Breast epithelium (tissue), 4 donors: ENCODE measurements at regions of chr6 and their contacts with region 1.

Region 1: DNA sequence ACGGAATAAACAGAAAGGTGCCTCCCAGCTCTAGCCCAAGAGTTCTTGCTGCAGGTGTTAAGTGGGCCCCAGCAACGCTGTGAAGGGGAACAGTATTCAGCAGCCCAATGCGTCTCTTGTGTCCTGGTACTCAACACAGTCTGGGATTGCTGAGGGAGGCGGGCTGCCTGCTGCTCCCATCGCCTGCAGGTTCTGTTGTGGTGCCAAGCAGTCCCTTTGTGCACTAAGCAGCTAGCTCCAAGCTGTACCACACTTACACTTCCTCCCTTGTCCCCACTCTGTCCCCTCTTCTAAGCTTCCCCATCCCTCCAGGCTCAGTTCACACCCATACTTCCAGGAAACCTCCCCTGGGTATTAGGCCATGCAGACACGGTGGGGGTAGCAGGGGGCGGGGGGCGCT is 92.7 kb downstream of the AGPAT4 start:
- DNase-seq: no peak
- H3K4me3 ChIP-seq: no peak overlapping the region
- H3K27ac ChIP-seq: no peak overlapping the region
- H3K4me1 ChIP-seq: no peaks in the 10 kb centered on the region
- H3K27me3 ChIP-seq: no peaks in the 10 kb centered on the region
- CTCF ChIP-seq: no peak
- POLR2A ChIP-seq: no peak

Region 2: GRCh38 chr6:162082520-162082919 is 901.4 kb after region 1 on chr6:
- intact Hi-C with region 1: loop called (anchors 5 kb)
- DNase-seq: no peak
- H3K4me3 ChIP-seq: no peak overlapping the region
- H3K27ac ChIP-seq: no peak overlapping the region
- H3K4me1 ChIP-seq: no peaks in the 10 kb centered on the region
- H3K27me3 ChIP-seq: no peaks in the 10 kb centered on the region
- CTCF ChIP-seq: no peak
- POLR2A ChIP-seq: no peak